Activated CD4-positive, alpha-beta T cell treated with anti-CD3 and anti-CD28 coated beads, Interleukin-2, amount 10 ng/mL, durations not matched to agents 7 days and 5 days (primary cell): ENCODE measurements at regions of chr12 and their contacts with region 1.

Region 1: GRCh38 chr12:2944401-2945047 is 14.7 kb upstream of the TEAD4 start:
- DNase-seq: peak; percentile 66
- H3K4me3 Mint-ChIP-seq: no peak overlapping the region
- H3K27ac Mint-ChIP-seq: no peak overlapping the region
- H3K4me1 Mint-ChIP-seq: peaks cover 4% of the 10 kb centered on the region
- H3K27me3 Mint-ChIP-seq: peaks cover 5% of the 10 kb centered on the region

Region 2: GRCh38 chr12:2890388-2891239 is 53.9 kb before region 1 on chr12 and contains the start of gene TULP3:
- CTCF ChIA-PET with region 1: interaction called, 10 read pairs
- POLR2A ChIA-PET with region 1: no interaction called
- DNase-seq: peak; percentile 98
- H3K4me3 Mint-ChIP-seq: peak within 1 kb of the TSS; percentile 95
- H3K27ac Mint-ChIP-seq: peak within 1 kb of the TSS; percentile 87
- H3K4me1 Mint-ChIP-seq: peaks cover 41% of the 10 kb centered on the region
- H3K27me3 Mint-ChIP-seq: no peaks in the 10 kb centered on the region
- total RNA-seq, gene TULP3: 8.6 to 9.1 TPM

Region 3: DNA sequence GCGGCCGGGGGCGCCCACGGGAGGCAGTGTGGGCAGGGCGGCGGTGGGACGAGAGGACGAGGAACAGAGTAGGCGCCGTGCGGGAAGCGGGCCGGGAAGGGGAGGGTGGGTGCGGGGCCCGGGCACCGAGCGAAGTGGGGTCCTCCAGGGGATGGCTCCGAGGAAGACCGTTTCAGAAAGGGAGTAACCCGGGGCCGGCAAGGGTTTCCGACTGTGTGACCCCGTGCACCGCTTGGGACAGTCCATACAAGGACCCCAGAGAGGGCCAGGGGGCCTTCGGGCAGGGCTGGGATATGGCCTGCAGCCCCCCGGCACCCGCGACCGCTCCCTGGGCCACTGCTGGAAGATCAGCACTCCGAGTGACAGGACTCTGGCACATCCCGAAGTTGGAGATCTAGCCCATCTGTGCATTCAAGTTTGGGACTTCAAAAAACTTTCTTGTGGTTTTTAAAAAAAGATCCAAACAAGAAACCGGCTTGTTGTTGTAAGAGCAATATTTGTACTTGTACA is 133.1 kb after region 1 on chr12:
- CTCF ChIA-PET with region 1: no interaction called
- POLR2A ChIA-PET with region 1: no interaction called
- DNase-seq: no peak
- H3K4me3 Mint-ChIP-seq: peak overlapping the region; percentile 59
- H3K27ac Mint-ChIP-seq: no peak overlapping the region
- H3K4me1 Mint-ChIP-seq: peaks cover 9% of the 10 kb centered on the region
- H3K27me3 Mint-ChIP-seq: peaks cover 22% of the 10 kb centered on the region